Head of caudate nucleus (tissue), 42 donors: ENCODE measurements at regions of chr19 and their contacts with region 1.

Region 1: GRCh38 chr19:3471954-3472655 is 8.2 kb downstream of the SMIM24 start:
- DNase-seq: peak in 26 of 42 donors; percentile 23 to 80 (median 52)

Region 2: DNA sequence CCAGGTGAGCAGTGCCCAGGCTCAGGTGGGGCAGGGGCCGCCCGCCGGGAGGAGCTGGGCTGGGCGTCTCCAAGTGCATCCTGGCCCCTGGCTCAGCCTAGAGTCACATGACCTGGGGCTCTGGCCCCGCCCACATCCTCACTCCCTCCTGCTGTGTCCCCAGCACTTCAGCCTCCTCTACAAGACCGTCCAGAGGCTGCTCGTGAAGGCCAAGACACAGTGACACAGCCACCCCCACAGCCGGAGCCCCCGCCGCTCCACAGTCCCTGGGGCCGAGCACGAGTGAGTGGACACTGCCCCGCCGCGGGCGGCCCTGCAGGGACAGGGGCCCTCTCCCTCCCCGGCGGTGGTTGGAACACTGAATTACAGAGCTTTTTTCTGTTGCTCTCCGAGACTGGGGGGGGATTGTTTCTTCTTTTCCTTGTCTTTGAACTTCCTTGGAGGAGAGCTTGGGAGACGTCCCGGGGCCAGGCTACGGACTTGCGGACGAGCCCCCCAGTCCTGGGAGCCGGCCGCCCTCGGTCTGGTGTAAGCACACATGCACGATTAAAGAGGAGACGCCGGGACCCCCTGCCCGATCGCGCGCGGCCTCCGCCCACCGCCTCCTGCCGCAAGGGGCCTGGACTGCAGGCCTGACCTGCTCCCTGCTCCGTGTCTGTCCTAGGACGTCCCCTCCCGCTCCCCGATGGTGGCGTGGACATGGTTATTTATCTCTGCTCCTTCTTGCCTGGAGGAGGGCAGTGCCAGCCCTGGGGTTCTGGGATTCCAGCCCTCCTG is 264.5 kb before region 1 on chr19:
- intact Hi-C with region 1: loop called (anchors 10 kb)
- DNase-seq: no peak

Region 3: DNA sequence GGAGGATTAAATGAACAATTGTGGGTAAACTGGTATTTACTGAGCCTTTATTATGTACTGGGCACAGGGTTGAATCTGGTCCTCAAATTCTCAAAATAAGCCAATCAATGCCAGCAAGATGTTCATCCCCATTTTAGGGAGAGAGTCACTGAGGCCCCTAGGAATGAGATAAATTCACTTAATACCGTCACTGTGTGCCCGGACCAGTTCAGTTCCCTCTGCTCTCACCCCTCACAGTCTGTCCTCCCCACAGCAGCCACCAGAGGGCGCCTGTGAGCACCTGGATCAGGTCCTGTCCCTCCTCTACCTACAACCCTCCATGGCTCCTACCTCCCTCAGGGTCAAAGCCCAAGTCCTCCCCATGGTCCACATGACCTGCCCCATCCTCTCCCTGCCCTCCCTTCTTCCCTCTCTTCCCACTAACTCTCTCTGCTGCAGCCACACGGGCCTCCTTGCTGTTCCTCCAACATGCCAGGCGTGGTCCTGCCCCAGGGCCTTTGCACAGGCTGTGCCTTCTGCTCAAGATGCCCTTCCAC is 147.7 kb before region 1 on chr19:
- intact Hi-C with region 1: loop called (anchors 2 kb)
- DNase-seq: peak in 31 of 42 donors; percentile 23 to 81 (median 50)

Region 4: DNA sequence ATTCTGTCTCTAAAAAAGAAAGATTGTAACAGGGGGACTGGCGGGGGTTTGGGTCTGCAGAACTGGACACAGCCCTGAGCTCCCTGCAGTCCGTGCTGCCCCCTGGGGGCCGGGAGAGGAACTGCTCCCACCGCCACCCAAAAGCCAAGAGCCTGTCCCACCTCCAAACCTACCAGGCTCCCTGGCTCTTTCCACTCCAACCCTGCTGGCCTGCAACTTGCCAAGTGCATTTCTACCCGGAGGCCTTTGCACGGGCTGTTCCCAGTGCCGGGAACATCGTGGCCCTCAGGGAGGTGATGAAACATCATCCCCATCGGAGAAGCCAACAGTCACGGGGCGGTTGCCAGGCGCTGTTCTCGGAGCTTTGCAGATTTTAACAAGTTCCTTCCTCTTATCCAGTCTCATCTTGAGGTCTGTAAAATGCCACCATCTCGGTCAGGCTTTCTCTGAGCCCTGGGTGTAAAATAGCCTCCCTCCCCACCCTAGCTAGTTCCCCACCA is 42.5 kb before region 1 on chr19:
- intact Hi-C with region 1: loop called (anchors 10 kb)
- DNase-seq: peak; percentile 60 to 94 (median 85)